Activated T-helper 1 cell treated with anti-CD3 and anti-CD28 coated beads, Interleukin-12 subunit alpha, Interleukin-12 subunit beta, Interleukin-2, Interleukin-4 antibody, amounts not matched to agents 30 ng/mL and 10 ng/mL and 1 ng/mL, durations not matched to agents 14 hours and 24 hours and 36 hours (primary cell): ENCODE measurements at regions of chr1 and their contacts with region 1.

Region 1: DNA sequence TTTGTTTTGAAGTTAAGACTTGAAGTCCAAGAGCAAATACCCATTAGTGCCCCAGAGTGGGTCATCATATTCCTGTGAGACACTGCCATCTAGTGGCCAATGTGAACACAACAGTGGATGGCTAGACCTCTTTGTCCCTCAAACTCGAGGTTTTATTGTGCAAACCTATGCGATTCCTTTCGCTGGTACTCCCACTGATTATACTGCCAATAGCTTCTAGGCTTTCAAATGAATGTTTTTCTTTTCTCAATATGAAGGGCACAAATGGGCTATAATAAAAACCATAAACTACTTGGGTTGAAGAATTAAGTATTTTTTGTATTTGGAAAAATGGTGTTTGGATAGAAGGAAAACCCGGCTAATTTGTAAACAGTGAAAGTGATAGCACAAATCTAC is 100.4 kb upstream of the ZNF281 start:
- DNase-seq: peak; percentile 47
- H3K4me3 Mint-ChIP-seq: no peak overlapping the region
- H3K27ac Mint-ChIP-seq: no peak overlapping the region
- H3K4me1 Mint-ChIP-seq: peaks cover 4% of the 10 kb centered on the region
- H3K27me3 Mint-ChIP-seq: peaks cover 23% of the 10 kb centered on the region

Region 2: DNA sequence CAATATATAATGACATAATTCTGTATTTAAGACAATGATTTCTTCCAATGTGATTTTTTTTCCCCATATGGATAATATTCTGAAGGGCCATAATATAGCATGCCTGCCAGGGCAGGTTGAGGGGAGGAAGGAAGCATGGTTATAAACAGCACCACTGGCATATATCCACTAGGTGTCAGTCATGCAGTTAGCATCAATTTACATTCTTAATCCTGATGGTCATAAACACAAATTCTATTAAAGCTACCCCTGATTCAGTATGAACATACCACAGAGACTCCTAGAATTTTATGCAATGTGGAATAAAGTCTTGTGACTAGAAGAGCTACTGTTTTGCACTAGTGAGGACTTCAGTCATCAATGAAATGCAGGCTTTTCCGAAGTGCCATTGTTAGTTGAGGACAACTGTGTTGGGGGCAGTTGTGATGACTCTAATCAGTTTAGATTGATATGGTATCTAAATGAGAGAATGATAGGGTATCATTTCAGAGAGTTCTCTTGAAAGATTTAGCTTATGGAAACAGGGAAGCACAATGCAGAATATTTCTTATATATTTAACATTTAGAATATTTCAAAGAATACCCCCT is 825.4 kb before region 1 on chr1:
- intact Hi-C with region 1: loop called (anchors 1 kb)
- DNase-seq: no peak
- H3K4me3 Mint-ChIP-seq: no peak overlapping the region
- H3K27ac Mint-ChIP-seq: no peak overlapping the region
- H3K4me1 Mint-ChIP-seq: no peaks in the 10 kb centered on the region
- H3K27me3 Mint-ChIP-seq: peaks cover 23% of the 10 kb centered on the region

Region 3: GRCh38 chr1:200038981-200039848 is 471.0 kb before region 1 on chr1:
- intact Hi-C with region 1: loop called (anchors 5 kb)
- DNase-seq: no peak
- H3K4me3 Mint-ChIP-seq: peak overlapping the region; percentile 72
- H3K27ac Mint-ChIP-seq: no peak overlapping the region
- H3K4me1 Mint-ChIP-seq: peaks cover 27% of the 10 kb centered on the region
- H3K27me3 Mint-ChIP-seq: peaks cover 77% of the 10 kb centered on the region

Region 4: DNA sequence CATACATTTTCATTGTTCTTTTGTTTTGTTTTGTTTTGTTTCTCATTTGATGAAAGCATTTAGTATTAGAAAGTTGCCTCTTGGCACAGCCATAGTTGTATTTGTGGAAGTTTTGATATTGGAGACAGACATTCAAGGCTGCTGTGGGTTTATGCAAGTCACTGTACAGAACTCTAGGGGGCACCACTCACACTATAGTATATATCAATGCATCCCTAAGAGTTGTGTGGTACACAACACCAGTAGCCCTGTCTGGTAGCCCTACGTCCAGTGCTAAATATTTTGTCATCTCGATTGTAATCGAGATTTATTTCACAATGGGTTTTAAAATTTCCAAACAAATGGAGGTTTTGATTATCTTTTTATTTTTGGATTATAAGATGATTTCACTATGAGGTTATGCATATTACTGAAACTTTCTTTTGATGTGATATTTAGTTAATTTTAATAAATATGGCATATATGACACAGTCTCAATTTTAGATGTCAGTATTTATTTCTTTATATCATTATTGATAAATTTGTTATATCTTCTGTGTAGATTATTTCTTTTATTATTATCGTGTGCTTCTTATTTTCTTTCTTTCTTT is 370.5 kb before region 1 on chr1:
- intact Hi-C with region 1: loop called (anchors 1 kb)
- DNase-seq: no peak
- H3K4me3 Mint-ChIP-seq: no peak overlapping the region
- H3K27ac Mint-ChIP-seq: no peak overlapping the region
- H3K4me1 Mint-ChIP-seq: peaks cover 29% of the 10 kb centered on the region
- H3K27me3 Mint-ChIP-seq: peaks cover 11% of the 10 kb centered on the region

Region 5: DNA sequence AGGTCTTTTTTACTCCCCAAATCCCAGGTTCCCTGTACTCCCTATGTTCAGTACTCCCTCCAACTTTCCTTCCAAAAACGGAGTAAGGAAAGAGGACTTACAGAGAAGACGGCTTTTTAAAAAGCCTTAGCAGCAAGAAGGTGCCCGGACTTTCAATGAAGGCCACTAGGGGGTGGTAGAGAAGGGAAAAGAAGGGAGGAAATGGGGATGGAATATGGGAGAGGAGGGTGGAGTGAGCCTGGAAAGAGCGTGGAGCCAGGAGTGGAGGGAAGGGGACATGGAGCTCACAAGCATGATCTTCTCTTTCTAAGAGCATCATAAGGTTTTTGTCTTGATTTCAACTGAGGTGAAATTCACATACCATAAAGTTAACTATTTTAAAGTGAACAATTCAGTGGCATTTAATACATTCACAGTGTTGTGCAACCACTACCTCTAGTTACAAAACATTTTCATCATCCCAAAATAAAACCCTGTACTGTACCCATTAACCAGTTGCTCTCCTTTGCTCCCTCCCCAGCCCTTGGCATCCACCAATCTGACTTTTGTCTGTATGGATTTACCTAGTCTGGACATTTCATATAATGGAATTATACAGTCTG is 230.3 kb before region 1 on chr1:
- intact Hi-C with region 1: loop called (anchors 1 kb)
- DNase-seq: no peak
- H3K4me3 Mint-ChIP-seq: no peak overlapping the region
- H3K27ac Mint-ChIP-seq: no peak overlapping the region
- H3K4me1 Mint-ChIP-seq: no peaks in the 10 kb centered on the region
- H3K27me3 Mint-ChIP-seq: peaks cover 10% of the 10 kb centered on the region

Region 6: DNA sequence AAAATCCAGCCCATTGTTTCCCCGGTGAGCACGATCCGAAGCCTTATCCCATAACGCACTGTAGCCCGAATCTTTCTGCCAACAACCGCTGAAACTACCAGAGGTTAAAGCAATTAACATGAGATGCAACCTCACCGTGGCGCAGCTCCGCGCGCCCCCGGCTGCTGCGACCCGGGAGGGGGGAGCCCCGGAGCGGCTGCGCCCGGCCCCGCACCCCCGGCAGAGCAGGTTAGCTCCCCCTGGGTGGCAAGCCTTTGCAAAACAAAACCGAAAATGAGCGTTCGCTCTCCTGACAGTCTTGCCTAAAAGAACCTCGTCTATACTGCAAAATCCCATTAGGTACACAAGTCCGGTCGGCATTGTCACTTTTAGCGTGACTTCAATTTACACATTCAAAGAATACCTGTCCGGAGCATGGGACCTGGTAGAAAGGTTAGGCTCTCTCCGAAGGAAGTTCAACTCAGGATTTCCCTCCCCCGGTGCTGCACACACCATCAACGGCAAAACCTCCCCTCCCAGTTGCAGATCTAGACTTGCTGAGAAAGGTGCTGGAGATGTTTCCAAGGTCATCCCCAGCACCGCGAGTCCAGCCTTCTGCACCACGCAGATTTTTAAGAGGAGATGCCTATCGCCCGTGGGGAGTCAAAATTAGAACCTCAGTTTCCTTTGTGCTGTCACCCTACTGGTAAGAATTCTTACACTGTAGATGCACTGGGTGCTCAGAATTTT is 207.9 kb before region 1 on chr1:
- intact Hi-C with region 1: loop called (anchors 1 kb)
- DNase-seq: peak; percentile 53
- H3K4me3 Mint-ChIP-seq: peak overlapping the region; percentile 83
- H3K27ac Mint-ChIP-seq: no peak overlapping the region
- H3K4me1 Mint-ChIP-seq: peaks cover 23% of the 10 kb centered on the region
- H3K27me3 Mint-ChIP-seq: peaks cover 17% of the 10 kb centered on the region